HCT116 (cell line): ENCODE measurements at regions of chr1 and their contacts with region 1.

Region 1: GRCh38 chr1:167553136-167554027 is at the start of gene CREG1:
- DNase-seq: peak; percentile 75
- ATAC-seq: peak; percentile 98
- H3K4me3 ChIP-seq: peak within 1 kb of the TSS; percentile 65 to 73
- H3K27ac ChIP-seq: peak within 1 kb of the TSS; percentile 50
- H3K4me1 ChIP-seq: peaks cover 12 to 18% of the 10 kb centered on the region in 2 experiments; a peak in 3 of 4 replicates
- H3K27me3 ChIP-seq: no peaks in the 10 kb centered on the region
- CTCF ChIP-seq: no peak
- POLR2A ChIP-seq: peak; percentile 79
- RAD21 ChIP-seq: no peak
- total RNA-seq, gene CREG1: 55.7 TPM

Region 2: DNA sequence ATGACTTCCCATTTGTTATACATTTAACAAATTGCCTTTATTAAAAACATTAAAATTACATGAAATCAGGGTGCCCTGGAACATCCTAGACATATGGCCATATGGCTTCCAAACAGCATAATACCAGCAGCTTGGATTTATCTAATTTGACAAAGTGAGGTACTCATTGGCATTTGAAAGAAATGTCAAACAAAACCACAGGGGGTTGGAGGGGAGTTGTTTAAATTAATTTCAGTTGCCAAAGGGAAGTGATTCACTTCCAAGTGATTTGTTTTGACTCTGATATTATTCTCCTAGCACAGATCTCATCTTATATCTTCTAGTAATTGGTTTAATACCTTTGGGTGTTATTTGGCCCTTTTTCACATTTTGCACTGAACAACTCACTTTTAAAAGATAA is 357.2 kb before region 1 on chr1:
- CTCF ChIA-PET with region 1: no interaction called
- POLR2A ChIA-PET with region 1: no interaction called
- RAD21 ChIA-PET with region 1: no interaction called
- intact Hi-C with region 1: no loop called
- DNase-seq: no peak
- ATAC-seq: no peak
- H3K4me3 ChIP-seq: no peak overlapping the region
- H3K27ac ChIP-seq: no peak overlapping the region
- H3K4me1 ChIP-seq: peaks cover 0 to 6% of the 10 kb centered on the region in 2 experiments; a peak in 2 of 4 replicates
- H3K27me3 ChIP-seq: no peaks in the 10 kb centered on the region
- CTCF ChIP-seq: no peak
- POLR2A ChIP-seq: no peak
- RAD21 ChIP-seq: no peak

Region 3: DNA sequence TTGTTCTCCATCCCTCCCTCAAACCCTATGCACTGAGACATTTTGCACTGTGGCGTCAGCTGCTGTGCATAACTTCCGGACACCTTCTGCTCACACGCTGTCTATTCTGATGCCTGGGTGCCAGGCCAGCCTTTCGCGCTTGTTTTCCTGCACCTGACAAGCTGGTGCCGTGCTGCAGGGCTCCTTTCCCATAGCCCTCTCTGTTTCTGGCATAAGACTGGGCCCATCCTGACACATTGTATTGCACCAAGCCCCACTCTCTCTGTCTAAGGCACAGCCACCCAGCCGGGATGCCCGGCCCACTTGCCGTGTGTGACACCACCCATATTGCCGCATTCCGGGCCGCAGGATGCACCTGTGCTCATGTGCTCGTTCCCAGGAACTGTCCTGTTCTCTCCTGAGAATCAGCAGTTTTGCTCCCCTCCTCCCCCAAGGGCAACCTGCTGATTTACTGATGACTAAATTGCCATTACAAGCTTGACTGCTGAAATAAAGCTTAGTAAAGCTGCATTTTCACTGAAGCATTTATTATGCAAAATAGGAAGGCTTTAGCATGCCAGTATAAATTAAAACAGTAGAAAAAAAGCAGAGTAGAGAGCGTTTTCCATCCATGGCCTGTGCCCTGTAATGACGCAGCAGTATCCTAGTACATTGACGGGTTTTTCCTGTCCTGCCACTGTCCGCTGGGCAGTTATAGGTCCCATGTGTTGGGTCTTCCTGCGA is 123.1 kb before region 1 on chr1:
- CTCF ChIA-PET with region 1: no interaction called
- POLR2A ChIA-PET with region 1: no interaction called
- RAD21 ChIA-PET with region 1: no interaction called
- intact Hi-C with region 1: no loop called
- DNase-seq: no peak
- ATAC-seq: no peak
- H3K4me3 ChIP-seq: no peak overlapping the region
- H3K27ac ChIP-seq: no peak overlapping the region
- H3K4me1 ChIP-seq: no peaks in the 10 kb centered on the region
- H3K27me3 ChIP-seq: no peaks in the 10 kb centered on the region
- CTCF ChIP-seq: no peak
- POLR2A ChIP-seq: no peak
- RAD21 ChIP-seq: no peak

Region 4: GRCh38 chr1:167542109-167543032 is 11.0 kb before region 1 on chr1:
- CTCF ChIA-PET with region 1: interaction called, 17 read pairs
- POLR2A ChIA-PET with region 1: interaction called, 4 read pairs
- RAD21 ChIA-PET with region 1: no interaction called
- intact Hi-C with region 1: no loop called
- DNase-seq: no peak
- ATAC-seq: no peak
- H3K4me3 ChIP-seq: no peak overlapping the region
- H3K27ac ChIP-seq: no peak overlapping the region
- H3K4me1 ChIP-seq: no peaks in the 10 kb centered on the region
- H3K27me3 ChIP-seq: no peaks in the 10 kb centered on the region
- CTCF ChIP-seq: no peak
- POLR2A ChIP-seq: no peak
- RAD21 ChIP-seq: no peak

Region 5: DNA sequence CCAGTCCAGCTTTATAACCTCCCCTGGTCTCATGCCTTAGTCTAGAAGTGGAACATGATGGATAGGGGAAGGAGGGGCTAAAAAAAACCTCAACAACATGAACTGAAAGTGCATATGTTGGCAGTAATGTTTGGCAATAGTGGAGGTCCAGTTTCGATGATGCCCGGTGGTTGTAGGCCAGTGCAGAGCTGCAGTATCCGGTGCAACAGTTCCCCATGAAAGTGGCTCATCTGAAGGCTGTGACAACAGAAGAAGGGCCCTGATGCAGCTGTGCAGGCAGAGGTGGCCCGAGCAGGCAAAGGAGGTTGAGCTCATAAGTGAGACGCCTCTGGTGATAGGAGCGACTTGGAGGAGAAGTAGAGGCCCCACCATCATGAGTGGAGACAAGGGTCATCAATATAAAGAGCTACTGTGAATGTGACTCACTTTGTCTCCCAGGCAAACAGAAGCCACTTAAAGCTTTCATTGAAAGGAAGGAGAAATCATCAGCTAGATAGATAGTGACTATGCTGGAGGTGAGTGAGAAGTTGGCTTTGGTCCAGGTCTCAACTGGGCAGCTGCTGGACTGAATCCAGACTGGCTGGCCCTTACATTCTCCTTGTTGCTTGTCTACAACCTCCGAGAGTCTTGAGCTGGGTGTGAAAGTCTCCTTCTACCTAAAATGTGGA is 10.3 kb after region 1 on chr1:
- CTCF ChIA-PET with region 1: interaction called, 4 read pairs
- POLR2A ChIA-PET with region 1: interaction called, 10 read pairs
- RAD21 ChIA-PET with region 1: no interaction called
- intact Hi-C with region 1: no loop called
- DNase-seq: no peak
- ATAC-seq: no peak
- H3K4me3 ChIP-seq: no peak overlapping the region
- H3K27ac ChIP-seq: no peak overlapping the region
- H3K4me1 ChIP-seq: peaks cover 0 to 4% of the 10 kb centered on the region in 2 experiments; a peak in 1 of 4 replicates
- H3K27me3 ChIP-seq: no peaks in the 10 kb centered on the region
- CTCF ChIP-seq: no peak
- POLR2A ChIP-seq: no peak
- RAD21 ChIP-seq: no peak

Region 6: DNA sequence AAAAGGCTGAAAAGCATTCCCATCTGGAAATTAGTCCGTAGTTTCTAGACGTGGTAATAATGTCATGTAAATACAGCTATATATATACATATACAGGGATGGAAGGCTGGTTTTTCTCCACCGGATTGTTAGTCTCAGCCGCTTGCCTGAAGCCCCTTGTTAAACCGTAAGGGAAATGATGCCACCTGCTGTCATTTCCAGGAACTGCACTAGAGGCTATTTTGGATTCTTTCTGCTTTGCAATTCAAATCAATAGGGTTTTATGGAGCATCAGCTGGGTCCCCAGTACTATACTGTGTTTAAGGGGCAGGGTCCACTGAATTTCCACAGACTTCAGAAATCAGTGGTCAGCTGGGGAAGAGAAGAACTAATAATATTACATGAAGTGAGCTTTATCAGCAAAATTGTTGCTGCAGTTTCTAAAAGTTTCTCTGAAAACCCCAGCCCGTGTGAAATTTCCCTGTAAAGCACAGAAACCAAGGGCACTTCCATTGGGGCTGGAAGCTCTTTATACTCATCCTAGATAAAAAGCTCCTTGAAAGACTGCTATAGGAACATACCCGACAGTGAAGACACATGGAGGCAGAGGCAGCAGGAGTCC is 134.6 kb after region 1 on chr1:
- CTCF ChIA-PET with region 1: interaction called, 4 read pairs
- POLR2A ChIA-PET with region 1: no interaction called
- RAD21 ChIA-PET with region 1: no interaction called
- intact Hi-C with region 1: loop called (anchors 1 kb)
- DNase-seq: peak; percentile 72
- ATAC-seq: peak; percentile 86
- H3K4me3 ChIP-seq: no peak overlapping the region
- H3K27ac ChIP-seq: no peak overlapping the region
- H3K4me1 ChIP-seq: no peaks in the 10 kb centered on the region
- H3K27me3 ChIP-seq: no peaks in the 10 kb centered on the region
- CTCF ChIP-seq: peak; percentile 83 to 89 (median 85)
- POLR2A ChIP-seq: no peak
- RAD21 ChIP-seq: peak; percentile 89